ENCODE measurements at regions of chr4 and their contacts with region 1.

Region 1: DNA sequence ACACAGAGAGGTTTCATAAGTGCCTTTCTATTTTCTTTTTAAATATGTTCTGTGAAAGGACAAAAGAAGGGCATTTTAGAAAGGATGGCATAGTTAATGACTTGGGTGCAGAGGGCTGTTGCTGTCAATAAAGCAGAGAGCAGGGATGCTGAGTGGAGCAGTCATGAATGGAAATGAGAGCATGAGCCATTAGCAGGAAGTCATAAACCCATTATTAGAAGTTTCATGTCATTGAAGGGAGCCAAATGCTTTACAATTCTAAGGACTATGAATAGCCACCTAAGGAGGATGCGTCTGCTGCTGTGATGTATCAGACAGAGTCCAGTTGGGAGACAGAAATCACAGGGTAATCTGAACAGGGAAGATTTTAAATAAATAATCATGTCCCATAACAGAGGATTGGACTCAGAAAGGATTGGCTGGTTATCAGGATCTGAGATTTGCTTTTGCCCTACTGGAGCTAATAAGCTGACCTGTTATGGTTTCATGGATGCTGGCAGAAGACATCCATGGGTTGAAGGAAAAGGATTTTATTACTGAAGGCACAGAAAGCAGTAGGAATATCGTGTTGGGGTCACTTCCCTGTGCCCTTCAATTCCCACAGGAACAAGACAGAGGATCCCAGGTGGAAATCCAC is 47.5 kb upstream of the WDR19 start:
- DNase-seq: no peak
- ATAC-seq: peak; percentile 70
- H3K4me3 ChIP-seq: no peak overlapping the region
- H3K27ac ChIP-seq: peak overlapping the region; percentile 27; the same call in 1 of the 2 replicates
- H3K4me1 ChIP-seq: peaks cover 6% of the 10 kb centered on the region
- H3K27me3 ChIP-seq: no peaks in the 10 kb centered on the region
- CTCF ChIP-seq: no peak
- EP300 ChIP-seq: no peak
- POLR2A ChIP-seq: no peak
- RAD21 ChIP-seq: no peak

Region 2: GRCh38 chr4:38782452-38783108 is 352.2 kb before region 1 on chr4 and contains the start of gene TLR10:
- CTCF ChIA-PET with region 1: interaction called, 13 read pairs
- POLR2A ChIA-PET with region 1: no interaction called
- RAD21 ChIA-PET with region 1: interaction called, 4 read pairs
- SMC1A ChIA-PET with region 1: interaction called, 8 read pairs
- in situ Hi-C with region 1: no loop called
- intact Hi-C with region 1: no loop called
- DNase-seq: peak; percentile 82
- ATAC-seq: peak; percentile 74
- H3K4me3 ChIP-seq: peak within 1 kb of the TSS; percentile 81
- H3K27ac ChIP-seq: peak within 1 kb of the TSS; percentile 96
- H3K4me1 ChIP-seq: peaks cover 22% of the 10 kb centered on the region
- H3K27me3 ChIP-seq: no peaks in the 10 kb centered on the region
- CTCF ChIP-seq: peak; percentile 60 to 68 (median 63)
- EP300 ChIP-seq: no peak
- POLR2A ChIP-seq: peak; percentile 72
- RAD21 ChIP-seq: peak; percentile 83
- polyA plus RNA-seq, gene TLR10: 31.5 to 41.8 TPM

Region 3: GRCh38 chr4:38894340-38894982 is 240.3 kb before region 1 on chr4:
- CTCF ChIA-PET with region 1: interaction called, 295 read pairs
- POLR2A ChIA-PET with region 1: no interaction called
- RAD21 ChIA-PET with region 1: interaction called, 7 read pairs
- SMC1A ChIA-PET with region 1: interaction called, 19 read pairs
- in situ Hi-C with region 1: no loop called
- intact Hi-C with region 1: no loop called
- DNase-seq: no peak
- ATAC-seq: peak; percentile 42
- H3K4me3 ChIP-seq: no peak overlapping the region
- H3K27ac ChIP-seq: no peak overlapping the region
- H3K4me1 ChIP-seq: no peaks in the 10 kb centered on the region
- H3K27me3 ChIP-seq: no peaks in the 10 kb centered on the region
- CTCF ChIP-seq: peak in 2 of 3 experiments; percentile 4 to 27; a peak in 2 of 6 replicates
- EP300 ChIP-seq: no peak
- POLR2A ChIP-seq: no peak
- RAD21 ChIP-seq: no peak

Region 4: DNA sequence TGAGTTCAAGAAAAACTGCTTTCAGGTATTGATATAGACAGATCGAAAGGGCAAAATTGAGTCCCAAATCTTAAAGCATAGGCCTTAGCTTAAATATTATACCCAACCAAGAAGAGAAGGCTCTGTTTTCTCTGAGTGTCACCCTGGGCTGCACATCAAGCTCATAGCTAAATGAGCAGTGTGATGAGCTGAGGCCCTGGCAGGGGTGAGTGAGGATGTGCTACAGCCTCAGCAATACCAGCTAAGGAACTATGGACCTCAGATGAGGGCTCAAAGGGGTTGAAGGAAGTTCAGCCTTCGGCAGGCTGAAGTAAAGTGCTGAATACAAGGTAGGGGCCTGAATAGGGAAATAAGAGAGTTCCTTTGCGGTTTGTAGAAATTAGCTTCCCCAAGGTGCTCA is 187.9 kb before region 1 on chr4:
- CTCF ChIA-PET with region 1: no interaction called
- POLR2A ChIA-PET with region 1: no interaction called
- RAD21 ChIA-PET with region 1: no interaction called
- SMC1A ChIA-PET with region 1: no interaction called
- in situ Hi-C with region 1: no loop called
- intact Hi-C with region 1: no loop called
- DNase-seq: no peak
- ATAC-seq: no peak; the same call in 2 of the 3 replicates
- H3K4me3 ChIP-seq: no peak overlapping the region
- H3K27ac ChIP-seq: no peak overlapping the region
- H3K4me1 ChIP-seq: no peaks in the 10 kb centered on the region
- H3K27me3 ChIP-seq: no peaks in the 10 kb centered on the region
- CTCF ChIP-seq: no peak
- EP300 ChIP-seq: no peak
- POLR2A ChIP-seq: no peak
- RAD21 ChIP-seq: no peak

Region 5: DNA sequence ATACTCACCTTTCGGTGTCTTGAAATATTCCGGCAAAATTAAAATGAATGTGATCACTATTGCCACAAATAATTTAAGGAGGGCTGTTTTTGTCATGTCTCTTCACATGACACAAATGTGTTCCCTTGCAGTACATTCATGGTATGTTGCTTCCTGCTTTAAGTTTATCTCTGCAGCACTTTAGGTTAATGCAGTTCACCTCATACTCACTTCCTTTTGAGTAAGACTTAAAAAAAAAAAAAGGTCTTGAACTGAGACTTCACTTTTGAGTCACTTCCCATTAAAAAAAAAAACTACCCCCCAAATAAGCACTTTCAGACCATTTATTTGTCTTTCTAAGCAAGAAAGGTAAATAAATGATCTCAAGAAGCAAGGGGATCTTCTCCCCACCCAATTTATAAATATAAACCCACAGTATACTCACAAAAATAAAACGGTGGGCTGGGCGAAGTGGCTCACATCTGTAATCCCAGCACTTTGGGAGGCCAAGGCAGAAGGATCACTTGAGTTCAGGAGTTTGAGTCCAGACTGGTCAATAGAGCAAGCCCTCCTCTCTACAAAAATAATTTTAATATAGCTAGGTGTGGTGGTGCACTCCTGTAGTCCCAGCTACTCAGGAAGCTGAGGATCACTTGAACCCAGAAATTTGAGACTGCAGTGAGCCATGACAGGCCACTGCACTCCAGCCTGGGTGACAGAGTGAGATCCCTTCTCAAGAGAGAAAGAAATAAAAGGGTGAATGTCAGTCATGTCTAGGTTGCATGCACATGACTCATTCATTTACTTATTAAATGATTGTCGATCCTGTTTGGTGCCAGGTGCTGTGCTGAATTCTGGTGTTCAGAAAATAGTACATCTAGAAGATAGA is 102.3 kb before region 1 on chr4 and contains the start of gene TMEM156:
- CTCF ChIA-PET with region 1: interaction called, 5 read pairs
- POLR2A ChIA-PET with region 1: interaction called, 3 read pairs
- RAD21 ChIA-PET with region 1: interaction called, 7 read pairs
- SMC1A ChIA-PET with region 1: interaction called, 15 read pairs
- in situ Hi-C with region 1: no loop called
- intact Hi-C with region 1: no loop called
- DNase-seq: peak; percentile 82
- ATAC-seq: peak; percentile 70
- H3K4me3 ChIP-seq: peak within 1 kb of the TSS; percentile 79
- H3K27ac ChIP-seq: peak within 1 kb of the TSS; percentile 88
- H3K4me1 ChIP-seq: peaks cover 28% of the 10 kb centered on the region
- H3K27me3 ChIP-seq: no peaks in the 10 kb centered on the region
- CTCF ChIP-seq: no peak
- EP300 ChIP-seq: peak; percentile 56 to 90; a peak in 2 of 4 replicates
- POLR2A ChIP-seq: peak; percentile 39; the same call in 1 of the 2 replicates
- RAD21 ChIP-seq: no peak
- polyA plus RNA-seq, gene TMEM156: 35.0 to 36.2 TPM

Region 6: DNA sequence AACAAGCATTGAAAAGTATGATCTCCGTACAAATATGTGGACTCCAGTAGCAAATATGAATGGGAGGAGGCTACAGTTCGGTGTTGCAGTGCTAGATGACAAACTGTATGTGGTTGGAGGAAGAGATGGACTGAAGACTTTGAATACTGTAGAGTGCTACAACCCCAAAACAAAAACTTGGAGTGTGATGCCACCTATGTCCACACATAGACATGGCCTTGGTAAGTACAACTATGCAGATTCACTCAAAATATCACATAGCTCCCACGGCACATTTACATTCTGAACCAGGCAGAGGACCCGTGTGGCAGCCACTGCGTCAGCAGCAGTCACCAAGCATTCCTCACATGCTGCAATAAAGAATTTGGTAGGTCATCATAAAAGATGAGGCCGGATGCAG is 31.5 kb before region 1 on chr4:
- CTCF ChIA-PET with region 1: interaction called, 14 read pairs
- POLR2A ChIA-PET with region 1: no interaction called
- RAD21 ChIA-PET with region 1: interaction called, 5 read pairs
- SMC1A ChIA-PET with region 1: no interaction called
- in situ Hi-C with region 1: no loop called
- intact Hi-C with region 1: no loop called
- DNase-seq: no peak
- ATAC-seq: peak; percentile 71
- H3K4me3 ChIP-seq: no peak overlapping the region
- H3K27ac ChIP-seq: no peak overlapping the region
- H3K4me1 ChIP-seq: no peaks in the 10 kb centered on the region
- H3K27me3 ChIP-seq: no peaks in the 10 kb centered on the region
- CTCF ChIP-seq: peak in 1 of 3 experiments; percentile 25; a peak in 1 of 6 replicates
- EP300 ChIP-seq: no peak
- POLR2A ChIP-seq: no peak
- RAD21 ChIP-seq: peak; percentile 26; the same call in 1 of the 2 replicates

Region 7: GRCh38 chr4:39341075-39341725 is 206.4 kb after region 1 on chr4:
- CTCF ChIA-PET with region 1: no interaction called
- POLR2A ChIA-PET with region 1: no interaction called
- RAD21 ChIA-PET with region 1: no interaction called
- SMC1A ChIA-PET with region 1: no interaction called
- in situ Hi-C with region 1: no loop called
- intact Hi-C with region 1: no loop called
- DNase-seq: no peak
- ATAC-seq: peak; percentile 80
- H3K4me3 ChIP-seq: no peak overlapping the region
- H3K27ac ChIP-seq: no peak overlapping the region
- H3K4me1 ChIP-seq: no peaks in the 10 kb centered on the region
- H3K27me3 ChIP-seq: no peaks in the 10 kb centered on the region
- CTCF ChIP-seq: no peak
- EP300 ChIP-seq: no peak
- POLR2A ChIP-seq: no peak
- RAD21 ChIP-seq: no peak

Region 8: GRCh38 chr4:39429476-39430334 is 294.9 kb after region 1 on chr4:
- CTCF ChIA-PET with region 1: interaction called, 3 read pairs
- POLR2A ChIA-PET with region 1: no interaction called
- RAD21 ChIA-PET with region 1: no interaction called
- SMC1A ChIA-PET with region 1: no interaction called
- in situ Hi-C with region 1: no loop called
- intact Hi-C with region 1: loop called (anchors 10 kb)
- DNase-seq: no peak
- ATAC-seq: no peak
- H3K4me3 ChIP-seq: no peak overlapping the region
- H3K27ac ChIP-seq: no peak overlapping the region
- H3K4me1 ChIP-seq: no peaks in the 10 kb centered on the region
- H3K27me3 ChIP-seq: no peaks in the 10 kb centered on the region; a peak in 1 of 4 replicates
- CTCF ChIP-seq: no peak
- EP300 ChIP-seq: no peak
- POLR2A ChIP-seq: no peak
- RAD21 ChIP-seq: no peak

Region 9: GRCh38 chr4:39687014-39687413 is 552.2 kb after region 1 on chr4:
- CTCF ChIA-PET with region 1: no interaction called
- POLR2A ChIA-PET with region 1: no interaction called
- RAD21 ChIA-PET with region 1: no interaction called
- SMC1A ChIA-PET with region 1: no interaction called
- in situ Hi-C with region 1: no loop called
- intact Hi-C with region 1: no loop called
- DNase-seq: no peak
- ATAC-seq: peak; percentile 66
- H3K4me3 ChIP-seq: no peak overlapping the region
- H3K27ac ChIP-seq: no peak overlapping the region
- H3K4me1 ChIP-seq: peaks cover 16% of the 10 kb centered on the region
- H3K27me3 ChIP-seq: no peaks in the 10 kb centered on the region
- CTCF ChIP-seq: no peak
- EP300 ChIP-seq: no peak
- POLR2A ChIP-seq: no peak
- RAD21 ChIP-seq: no peak

Measured in GM12878 (cell line).